Dorsolateral prefrontal cortex (tissue), 120 donors: ENCODE measurements at regions of chr18 and their contacts with region 1.

Region 1: DNA sequence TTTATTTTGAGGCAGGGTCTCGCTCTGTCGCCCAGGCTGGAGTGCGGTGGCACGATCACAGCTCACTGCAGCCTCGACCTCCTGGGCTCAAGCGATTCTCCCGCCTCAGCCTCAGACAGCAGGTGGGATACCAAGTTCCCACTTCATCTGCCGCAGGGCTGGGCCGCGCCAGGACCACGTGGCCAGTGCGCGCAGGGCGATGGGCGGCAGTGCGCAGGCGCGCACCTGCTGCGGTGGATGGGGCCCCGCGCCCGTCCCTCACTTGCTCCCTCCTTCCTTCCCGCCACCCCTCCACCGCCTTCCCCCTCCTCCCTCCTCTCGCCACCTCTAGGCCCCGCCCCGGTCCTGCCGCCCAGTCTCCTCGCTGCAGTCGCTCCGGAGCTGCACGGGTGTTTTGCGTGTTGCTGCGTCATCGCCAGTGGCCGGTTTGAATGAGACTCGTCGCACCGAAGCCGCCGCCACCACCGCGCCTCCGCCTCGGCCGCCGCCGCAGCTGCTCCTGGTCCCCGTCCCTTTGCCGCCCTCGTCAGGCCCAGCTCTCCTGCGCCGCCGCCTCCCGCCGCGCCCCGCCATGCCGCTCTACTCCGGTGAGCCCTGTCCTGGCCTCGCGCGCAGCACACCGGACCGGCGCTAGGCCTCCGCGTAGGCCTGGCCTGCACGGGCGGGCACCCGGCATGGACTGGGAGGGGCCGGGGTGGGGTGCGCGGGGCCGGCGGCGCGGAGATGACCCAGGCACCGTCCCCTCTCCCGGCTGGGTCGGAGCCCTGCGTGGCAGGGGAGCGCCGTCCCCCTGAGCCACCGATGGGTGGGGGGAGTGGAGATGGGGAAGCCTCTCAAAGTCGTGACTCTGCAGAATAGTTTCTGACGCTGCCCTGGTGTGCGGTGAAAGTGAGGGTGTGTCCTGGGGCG is at the start of gene USP14:
- DNase-seq: peak; percentile 89 to 99 (median 96)
- H3K4me3 ChIP-seq: peak within 1 kb of the TSS; percentile 71 to 99 (median 95)
- H3K27ac ChIP-seq: peak within 1 kb of the TSS in 56 of 59 donors; percentile 31 to 94 (median 79)
- H3K27me3 ChIP-seq: no peaks in the 10 kb centered on the region
- CTCF ChIP-seq: peak in 25 of 56 donors; percentile 8 to 46 (median 23)
- total RNA-seq, gene USP14: 37.5 to 83.0 (median 65.8) TPM

Region 2: GRCh38 chr18:111292-112014 is 46.9 kb before region 1 on chr18:
- intact Hi-C with region 1: loop called in 1 of 2 experiments (anchors 5 kb)
- DNase-seq: peak; percentile 24 to 84 (median 49)
- H3K4me3 ChIP-seq: peak overlapping the region in 58 of 59 donors; percentile 20 to 71 (median 53)
- H3K27ac ChIP-seq: peak overlapping the region in 47 of 59 donors; percentile 1 to 92 (median 75)
- H3K27me3 ChIP-seq: peaks cover 0 to 8% (median 0%) of the 10 kb centered on the region in 45 donors
- CTCF ChIP-seq: peak in 10 of 56 donors; percentile 5 to 31 (median 14)

Region 3: GRCh38 chr18:183769-184168 is 25.4 kb after region 1 on chr18:
- intact Hi-C with region 1: no loop called
- DNase-seq: no peak
- H3K4me3 ChIP-seq: no peak overlapping the region
- H3K27ac ChIP-seq: peak overlapping the region in 4 of 59 donors; percentile 23 to 45 (median 31)
- H3K27me3 ChIP-seq: no peaks in the 10 kb centered on the region
- CTCF ChIP-seq: no peak

Region 4: DNA sequence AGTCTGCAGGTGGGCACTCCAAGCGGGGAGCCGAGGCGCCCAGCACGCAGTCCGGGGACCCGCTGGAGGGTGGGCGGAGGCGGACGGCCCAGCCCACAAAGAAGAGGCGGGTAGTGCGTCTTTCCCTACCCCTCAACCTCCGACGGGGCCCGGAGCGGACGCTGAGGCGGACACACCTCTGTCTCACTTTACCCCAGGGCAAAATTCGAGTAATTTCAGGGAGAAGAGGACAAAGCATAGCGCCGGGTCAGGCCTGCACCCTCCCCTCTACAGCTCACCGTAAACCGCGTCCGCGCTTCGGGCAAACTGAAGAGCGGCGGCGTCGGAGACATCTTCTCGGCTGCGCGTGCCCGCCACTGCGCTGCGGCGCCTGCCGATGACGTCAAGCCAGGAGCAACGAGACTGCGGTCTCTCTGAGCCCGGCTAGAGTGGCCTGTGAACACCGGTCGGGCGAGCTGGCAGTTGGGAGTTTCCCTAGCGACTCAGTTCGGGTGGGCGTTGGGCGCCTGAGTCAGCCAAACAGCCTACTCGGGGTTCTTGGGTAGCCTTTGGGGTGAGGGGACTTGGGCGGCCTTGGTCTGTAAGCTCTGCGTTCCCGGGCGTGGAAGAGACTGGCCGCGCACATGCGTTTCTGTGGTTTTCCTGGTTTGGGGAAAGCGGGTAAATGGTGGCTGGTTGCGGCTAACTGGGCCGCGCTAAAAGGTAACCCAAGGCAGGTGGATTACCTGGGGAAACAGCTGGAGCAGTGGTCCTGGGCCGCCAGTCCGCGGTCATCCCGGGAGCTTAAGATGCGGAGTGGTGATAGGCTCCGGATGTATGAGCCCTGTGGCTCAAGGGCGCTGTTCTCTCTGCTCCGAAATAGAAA is 109.5 kb after region 1 on chr18 and contains the start of gene THOC1:
- intact Hi-C with region 1: loop called (anchors 2 kb)
- DNase-seq: peak; percentile 90 to 96 (median 94)
- H3K4me3 ChIP-seq: peak within 1 kb of the TSS; percentile 67 to 100 (median 95)
- H3K27ac ChIP-seq: peak within 1 kb of the TSS; percentile 4 to 95 (median 83)
- H3K27me3 ChIP-seq: no peaks in the 10 kb centered on the region
- CTCF ChIP-seq: peak in 45 of 56 donors; percentile 3 to 54 (median 28)
- total RNA-seq, gene THOC1: 37.5 to 82.2 (median 56.4) TPM